Activated CD8-positive, alpha-beta T cell treated with anti-CD3 and anti-CD28 coated beads for 36 hours (primary cell): ENCODE measurements at regions of chr2 and their contacts with region 1.

Region 1: DNA sequence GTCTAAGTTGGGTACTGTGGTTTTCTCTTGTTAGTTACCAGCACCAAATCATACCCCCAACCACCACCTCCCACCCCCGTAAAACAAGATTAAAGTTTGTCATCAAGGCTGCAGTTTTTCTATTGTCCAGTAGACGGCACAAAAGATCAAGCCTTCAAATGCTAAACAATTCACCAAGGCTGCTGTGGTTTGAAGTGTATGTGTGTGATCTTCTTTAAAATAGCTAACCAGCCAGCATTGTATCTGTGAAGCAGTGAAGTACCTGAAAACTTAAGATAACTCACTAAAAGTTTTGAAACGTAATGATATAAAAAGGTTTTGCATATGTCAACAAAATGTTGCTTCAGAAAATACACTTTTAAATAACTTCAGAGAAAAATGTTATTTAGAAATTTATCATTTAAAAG is 5.9 kb upstream of the MEIS1 start:
- DNase-seq: no peak
- ATAC-seq: peak; percentile 34
- H3K4me3 Mint-ChIP-seq: no peak overlapping the region
- H3K27ac Mint-ChIP-seq: no peak overlapping the region
- H3K4me1 Mint-ChIP-seq: peaks cover 11% of the 10 kb centered on the region
- H3K27me3 Mint-ChIP-seq: peaks cover 65% of the 10 kb centered on the region
- CTCF ChIP-seq: peak; percentile 51

Region 2: DNA sequence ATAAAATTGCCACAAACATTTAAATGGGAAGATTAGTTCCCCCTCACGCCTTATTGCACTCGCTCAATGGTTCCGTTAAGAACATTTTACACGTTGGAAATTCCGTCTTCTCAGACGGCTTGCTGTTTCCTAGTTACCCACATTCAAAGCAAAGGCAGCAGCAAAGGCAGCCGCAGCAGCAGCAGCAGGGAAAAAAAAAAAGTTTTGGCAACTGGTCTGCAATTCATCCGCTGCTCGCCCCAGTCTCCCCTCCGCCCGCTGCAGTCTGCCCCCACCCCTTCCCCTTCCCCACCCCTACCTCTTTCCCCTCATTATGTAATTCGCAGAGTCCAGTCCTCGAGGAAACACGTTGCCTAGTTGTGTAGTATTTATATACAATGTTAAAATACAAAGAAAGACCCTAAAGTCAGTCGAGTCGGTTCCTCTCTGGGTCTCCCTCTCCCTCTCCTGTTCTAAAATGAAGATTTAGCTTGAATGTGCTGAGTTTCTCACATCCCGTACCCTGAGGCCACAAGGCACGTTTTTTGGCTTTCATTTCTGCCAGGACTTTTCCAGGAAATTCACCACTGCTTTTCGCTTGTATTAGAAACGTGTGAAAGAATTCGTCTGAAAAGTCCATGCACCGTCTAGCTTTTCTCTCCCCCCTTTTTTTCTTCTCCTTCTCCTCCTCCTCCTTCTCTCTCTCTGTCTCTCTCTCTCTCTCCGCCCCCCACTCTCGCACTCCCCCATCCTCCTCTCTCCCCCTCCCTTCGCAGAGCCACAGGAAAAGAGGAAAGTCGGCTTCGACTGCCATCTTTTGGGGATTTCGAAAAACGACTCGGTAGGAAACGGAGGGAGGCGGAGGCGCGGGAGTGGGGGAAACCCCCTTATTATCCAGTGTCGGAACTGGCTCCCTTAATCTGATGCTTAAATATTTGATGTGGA is 145.9 kb after region 1 on chr2:
- CTCF ChIA-PET with region 1: interaction called, 3 read pairs
- POLR2A ChIA-PET with region 1: no interaction called
- intact Hi-C with region 1: loop called (anchors 2 kb)
- DNase-seq: no peak
- ATAC-seq: no peak
- H3K4me3 Mint-ChIP-seq: no peak overlapping the region
- H3K27ac Mint-ChIP-seq: no peak overlapping the region
- H3K4me1 Mint-ChIP-seq: peaks cover 5% of the 10 kb centered on the region
- H3K27me3 Mint-ChIP-seq: peaks cover 49% of the 10 kb centered on the region
- CTCF ChIP-seq: no peak